Calu3 (cell line): ENCODE measurements at regions of chr12 and their contacts with region 1.

Region 1: DNA sequence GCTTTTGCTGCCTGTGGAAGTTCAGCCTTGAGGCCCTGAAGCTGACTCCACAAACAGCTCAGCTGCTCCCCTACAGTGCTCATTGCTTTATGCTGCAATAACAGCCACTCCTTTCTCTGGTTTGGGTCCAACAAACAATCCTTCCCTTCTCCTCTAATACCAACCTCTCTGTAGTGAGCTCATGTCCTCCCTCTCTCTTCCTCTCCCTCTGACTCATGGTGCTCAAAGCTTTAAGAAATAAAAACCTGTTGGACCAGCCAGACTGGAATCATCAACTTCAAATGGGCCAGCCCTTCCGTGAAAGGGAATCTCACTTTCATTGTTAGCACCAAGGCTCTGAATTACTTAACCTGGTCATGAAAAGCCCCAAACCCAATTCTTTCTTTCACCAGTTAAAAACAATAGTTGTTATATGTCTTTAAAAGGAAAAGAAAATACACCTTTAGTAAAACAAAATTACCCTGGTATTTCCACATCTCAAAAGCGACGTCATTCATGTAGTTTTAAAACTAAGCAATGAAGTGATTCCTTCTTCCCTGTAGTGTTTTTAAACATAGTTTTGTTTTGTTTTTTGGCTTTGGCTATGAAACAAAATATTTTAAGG is 126.4 kb downstream of the DUSP6 start:
- DNase-seq: peak; percentile 80
- H3K4me3 Mint-ChIP-seq: peak overlapping the region; percentile 52
- H3K27ac Mint-ChIP-seq: peak overlapping the region; percentile 98
- H3K4me1 Mint-ChIP-seq: peaks cover 43% of the 10 kb centered on the region
- H3K27me3 Mint-ChIP-seq: no peaks in the 10 kb centered on the region
- CTCF ChIP-seq: no peak

Region 2: GRCh38 chr12:89029961-89030360 is 195.9 kb before region 1 on chr12:
- CTCF ChIA-PET with region 1: no interaction called
- intact Hi-C with region 1: no loop called
- DNase-seq: no peak
- H3K4me3 Mint-ChIP-seq: no peak overlapping the region
- H3K27ac Mint-ChIP-seq: no peak overlapping the region
- H3K4me1 Mint-ChIP-seq: no peaks in the 10 kb centered on the region
- H3K27me3 Mint-ChIP-seq: no peaks in the 10 kb centered on the region
- CTCF ChIP-seq: no peak

Region 3: DNA sequence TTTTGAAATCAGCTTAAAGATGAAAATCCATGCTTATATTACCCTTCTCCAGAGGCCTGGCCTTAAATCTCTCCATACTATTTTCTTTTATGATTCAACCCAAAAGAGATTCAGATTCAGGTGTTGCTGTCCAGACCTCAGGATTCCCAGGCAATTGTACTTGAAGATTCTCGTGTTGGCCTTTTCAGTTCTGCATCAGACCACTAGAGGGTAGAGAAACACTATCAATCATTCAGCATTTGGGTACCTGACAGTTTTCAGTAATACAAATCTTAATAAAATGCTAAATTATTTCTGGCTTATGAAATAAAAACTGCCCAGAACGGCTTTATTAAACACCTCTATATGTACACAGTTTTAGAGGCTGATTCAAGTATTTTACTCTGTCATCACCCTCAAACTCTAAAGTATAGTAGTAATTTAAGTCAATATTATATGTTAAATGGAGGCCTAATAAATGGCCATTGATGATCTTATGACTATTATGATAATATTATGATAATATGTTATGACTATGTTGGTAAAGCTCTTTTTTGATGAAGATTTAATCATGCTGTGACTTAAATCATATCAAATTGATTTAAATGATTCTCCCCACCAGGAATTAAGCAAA is 174.7 kb before region 1 on chr12:
- CTCF ChIA-PET with region 1: no interaction called
- intact Hi-C with region 1: loop called (anchors 5 kb)
- DNase-seq: peak; percentile 52
- H3K4me3 Mint-ChIP-seq: no peak overlapping the region
- H3K27ac Mint-ChIP-seq: no peak overlapping the region
- H3K4me1 Mint-ChIP-seq: no peaks in the 10 kb centered on the region
- H3K27me3 Mint-ChIP-seq: no peaks in the 10 kb centered on the region
- CTCF ChIP-seq: peak; percentile 79

Region 4: DNA sequence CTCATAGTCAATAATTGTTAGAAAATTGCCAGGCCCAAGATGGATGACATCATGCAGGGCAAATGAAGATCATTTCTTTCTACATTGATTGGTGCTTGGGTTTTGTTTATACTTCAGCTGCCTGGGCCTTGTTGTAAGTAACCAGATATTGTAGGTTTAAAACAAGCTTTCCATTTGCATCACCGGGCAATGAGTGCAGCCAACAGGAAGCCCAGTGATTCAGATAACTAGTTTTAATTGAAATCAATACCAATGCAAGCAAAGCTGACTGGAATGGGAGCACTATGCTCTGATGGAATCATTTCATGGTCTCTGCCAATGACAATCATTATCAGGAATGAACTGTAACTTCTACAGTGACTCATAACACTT is 152.9 kb before region 1 on chr12:
- CTCF ChIA-PET with region 1: no interaction called
- intact Hi-C with region 1: loop called (anchors 1 kb)
- DNase-seq: peak; percentile 75
- H3K4me3 Mint-ChIP-seq: peak overlapping the region; percentile 23
- H3K27ac Mint-ChIP-seq: peak overlapping the region; percentile 77
- H3K4me1 Mint-ChIP-seq: peaks cover 45% of the 10 kb centered on the region
- H3K27me3 Mint-ChIP-seq: no peaks in the 10 kb centered on the region
- CTCF ChIP-seq: no peak

Region 5: DNA sequence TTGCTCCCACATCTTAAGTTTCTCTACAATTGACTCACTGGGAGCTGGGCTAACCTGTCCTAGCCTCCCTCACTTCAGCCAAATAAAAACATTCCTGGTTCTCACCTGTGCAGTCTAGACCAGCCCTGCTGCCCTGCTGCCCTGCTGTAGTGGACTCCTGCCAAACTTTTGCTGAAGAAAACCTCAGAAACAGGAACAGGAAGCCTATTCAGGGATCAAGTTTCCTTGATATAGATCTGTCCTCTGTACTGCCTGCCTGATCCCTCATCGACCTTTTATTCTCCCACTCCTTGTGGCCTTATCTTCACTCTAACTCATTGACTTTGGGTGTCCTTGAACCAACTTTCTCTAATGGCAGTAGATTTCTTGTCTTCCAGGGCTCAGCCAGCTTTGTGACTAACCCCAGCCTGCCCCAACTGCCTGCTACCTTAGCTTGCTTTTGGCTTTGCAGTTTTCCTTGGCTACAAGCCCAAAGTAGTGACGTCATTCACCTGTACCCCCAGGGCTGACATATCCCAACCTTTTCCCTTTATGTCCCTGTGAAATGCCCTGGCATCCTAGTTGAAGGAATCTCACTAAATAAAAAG is 108.4 kb before region 1 on chr12:
- CTCF ChIA-PET with region 1: interaction called, 4 read pairs
- intact Hi-C with region 1: loop called (anchors 2 kb)
- DNase-seq: peak; percentile 88
- H3K4me3 Mint-ChIP-seq: peak overlapping the region; percentile 41
- H3K27ac Mint-ChIP-seq: peak overlapping the region; percentile 87
- H3K4me1 Mint-ChIP-seq: peaks cover 27% of the 10 kb centered on the region
- H3K27me3 Mint-ChIP-seq: no peaks in the 10 kb centered on the region
- CTCF ChIP-seq: no peak

Region 6: DNA sequence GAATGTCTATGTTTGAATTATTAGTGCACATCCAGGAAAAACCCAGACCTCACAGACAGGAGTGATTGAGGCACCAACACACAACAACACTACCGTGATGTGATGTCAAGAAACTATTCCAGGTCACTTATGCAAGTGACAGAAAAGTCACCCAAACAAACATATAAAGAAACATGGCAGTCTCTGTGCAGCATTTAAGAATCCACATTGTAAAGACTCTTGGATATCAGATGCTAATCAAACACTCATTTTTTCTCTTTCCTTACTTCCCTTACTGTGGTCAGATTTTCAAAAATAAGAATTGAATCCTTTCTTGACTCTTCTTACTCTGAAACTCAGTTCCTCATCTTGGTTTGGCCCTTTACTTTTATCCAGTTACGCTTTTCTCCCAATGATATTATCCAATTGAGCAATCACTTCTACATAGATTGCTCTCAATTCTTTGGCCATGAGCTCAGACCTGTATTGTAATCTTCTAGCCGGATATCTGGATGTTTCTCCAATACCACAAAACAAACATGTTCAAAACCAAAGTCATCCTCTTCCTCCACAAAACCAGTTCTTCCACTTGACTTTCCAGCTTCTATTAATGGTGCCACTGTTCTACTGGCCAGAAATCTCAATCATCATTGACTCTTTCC is 11.0 kb after region 1 on chr12:
- CTCF ChIA-PET with region 1: interaction called, 25 read pairs
- intact Hi-C with region 1: loop called (anchors 1 kb)
- DNase-seq: peak; percentile 53
- H3K4me3 Mint-ChIP-seq: peak overlapping the region; percentile 30
- H3K27ac Mint-ChIP-seq: peak overlapping the region; percentile 86
- H3K4me1 Mint-ChIP-seq: peaks cover 49% of the 10 kb centered on the region
- H3K27me3 Mint-ChIP-seq: no peaks in the 10 kb centered on the region
- CTCF ChIP-seq: no peak

Region 7: GRCh38 chr12:89405626-89406345 is 179.9 kb after region 1 on chr12:
- CTCF ChIA-PET with region 1: no interaction called
- intact Hi-C with region 1: no loop called
- DNase-seq: no peak
- H3K4me3 Mint-ChIP-seq: no peak overlapping the region
- H3K27ac Mint-ChIP-seq: no peak overlapping the region
- H3K4me1 Mint-ChIP-seq: no peaks in the 10 kb centered on the region
- H3K27me3 Mint-ChIP-seq: no peaks in the 10 kb centered on the region
- CTCF ChIP-seq: no peak

Region 8: GRCh38 chr12:89461649-89462612 is 236.0 kb after region 1 on chr12:
- CTCF ChIA-PET with region 1: no interaction called
- intact Hi-C with region 1: loop called (anchors 5 kb)
- DNase-seq: no peak
- H3K4me3 Mint-ChIP-seq: no peak overlapping the region
- H3K27ac Mint-ChIP-seq: no peak overlapping the region
- H3K4me1 Mint-ChIP-seq: peaks cover 29% of the 10 kb centered on the region
- H3K27me3 Mint-ChIP-seq: no peaks in the 10 kb centered on the region
- CTCF ChIP-seq: peak; percentile 32